ENCODE measurements at regions of chr16 and their contacts with region 1.

Region 1: DNA sequence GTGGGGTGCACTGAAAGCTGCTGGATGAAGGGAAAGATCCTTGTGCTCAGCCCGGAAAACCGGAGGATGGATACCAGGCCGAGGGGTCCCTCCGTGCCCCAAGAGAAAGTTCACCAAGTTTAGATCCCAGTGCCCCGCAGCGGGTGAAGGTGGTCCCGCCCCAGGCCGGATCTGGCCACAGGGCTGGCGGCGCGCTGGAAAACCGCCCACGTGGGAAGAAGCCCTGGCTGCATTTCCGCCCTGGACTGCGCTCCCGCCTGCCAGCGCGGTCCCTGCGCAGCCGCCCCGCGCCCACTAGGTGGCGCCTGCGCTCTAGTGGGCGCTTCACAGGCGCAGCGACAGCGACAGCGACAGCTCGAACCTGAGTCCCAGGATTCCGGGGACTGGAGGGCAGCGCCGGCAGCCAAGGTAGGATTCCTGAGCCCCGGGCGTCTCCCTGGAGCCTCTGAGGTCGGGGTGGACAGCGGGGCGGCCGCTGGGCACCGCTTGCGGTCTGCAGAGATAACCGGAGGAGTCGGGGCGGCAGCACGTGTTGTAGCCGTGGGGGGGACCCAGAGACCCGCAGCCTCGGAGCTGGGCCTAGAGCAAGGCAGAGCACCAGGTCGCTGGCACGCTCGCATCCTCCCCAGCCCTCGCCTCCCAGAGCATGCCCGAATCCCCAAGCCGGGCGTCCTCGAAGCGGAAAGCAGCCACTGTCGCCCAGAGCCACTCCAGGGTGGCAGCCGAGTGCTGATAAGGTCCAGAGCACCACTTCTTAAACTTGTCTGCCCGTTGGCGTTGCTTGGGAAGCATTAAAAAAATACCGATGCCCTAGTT is at the start of gene CHD9:
- DNase-seq: peak; percentile 87
- H3K4me3 ChIP-seq: peak within 1 kb of the TSS; percentile 43 to 72 (median 60)
- H3K27ac ChIP-seq: peak within 1 kb of the TSS; percentile 87 to 97 (median 94)
- H3K4me1 ChIP-seq: peaks cover 21 to 48% (median 33%) of the 10 kb centered on the region in 4 donors
- H3K27me3 ChIP-seq: no peaks in the 10 kb centered on the region
- CTCF ChIP-seq: peak; percentile 99 to 100 (median 99)
- EP300 ChIP-seq: no peak
- POLR2A ChIP-seq: peak; percentile 66
- total RNA-seq, gene CHD9: 37.4 to 112 (median 64.4) TPM

Region 2: GRCh38 chr16:52203096-52203495 is 851.8 kb before region 1 on chr16:
- in situ Hi-C with region 1: no loop called
- intact Hi-C with region 1: no loop called
- DNase-seq: no peak
- H3K4me3 ChIP-seq: no peak overlapping the region
- H3K27ac ChIP-seq: no peak overlapping the region
- H3K4me1 ChIP-seq: no peaks in the 10 kb centered on the region
- H3K27me3 ChIP-seq: no peaks in the 10 kb centered on the region
- CTCF ChIP-seq: no peak
- EP300 ChIP-seq: no peak
- POLR2A ChIP-seq: no peak

Region 3: DNA sequence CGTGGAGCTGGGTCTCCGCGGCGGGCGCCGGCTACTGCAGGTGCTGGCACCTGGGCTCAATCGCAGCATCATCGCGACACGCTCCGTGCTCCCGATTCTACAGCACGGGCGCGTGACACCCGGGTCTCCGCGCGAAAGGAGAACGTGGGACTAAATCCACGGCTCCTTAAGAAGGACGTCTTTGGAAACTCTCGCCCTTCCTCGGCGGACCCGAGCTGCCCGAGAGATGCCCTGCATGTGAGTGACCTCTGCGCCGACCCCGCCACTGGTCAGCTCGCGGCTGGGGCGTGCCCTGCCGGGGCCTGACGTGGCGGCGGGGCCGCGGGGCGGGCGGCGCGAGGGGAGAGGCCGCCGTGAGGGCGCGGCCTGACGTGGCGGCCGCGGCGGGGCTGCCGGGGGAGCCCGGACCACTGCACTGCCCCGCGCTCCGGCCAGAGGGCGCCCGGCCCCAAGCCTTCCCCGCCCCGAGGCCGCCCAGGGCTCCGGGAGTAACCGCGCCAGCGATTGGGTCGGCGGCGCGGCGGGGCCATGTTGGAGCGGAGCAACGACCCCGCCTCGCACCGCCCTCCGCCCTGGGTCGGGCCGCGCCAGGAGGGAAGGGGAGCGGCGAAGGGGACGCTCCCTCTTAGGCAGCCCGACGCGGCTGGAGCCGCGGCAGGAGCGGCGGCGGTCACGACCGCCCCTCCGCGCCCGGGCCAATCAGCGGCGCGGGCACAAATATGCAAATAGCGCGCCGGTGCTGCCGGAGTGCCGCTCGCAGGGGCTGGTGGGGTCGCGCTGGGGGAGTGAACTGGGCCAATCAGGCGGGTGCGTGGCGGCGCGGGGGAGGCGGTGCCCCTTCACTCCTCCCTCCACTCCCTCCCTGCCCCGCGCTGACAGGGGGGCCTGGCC is 75.5 kb after region 1 on chr16:
- in situ Hi-C with region 1: no loop called
- intact Hi-C with region 1: loop called (anchors 2 kb)
- DNase-seq: peak; percentile 97
- H3K4me3 ChIP-seq: peak overlapping the region; percentile 79 to 97 (median 92)
- H3K27ac ChIP-seq: peak overlapping the region; percentile 88 to 98 (median 98)
- H3K4me1 ChIP-seq: peaks cover 6 to 43% (median 29%) of the 10 kb centered on the region in 4 donors
- H3K27me3 ChIP-seq: no peaks in the 10 kb centered on the region
- CTCF ChIP-seq: peak in 4 of 5 experiments; percentile 48 to 70 (median 53)
- EP300 ChIP-seq: no peak
- POLR2A ChIP-seq: peak; percentile 59

Region 4: GRCh38 chr16:53142823-53143568 is 88.1 kb after region 1 on chr16:
- in situ Hi-C with region 1: loop called in 1 of 4 experiments (anchors 10 kb)
- intact Hi-C with region 1: no loop called
- DNase-seq: no peak
- H3K4me3 ChIP-seq: no peak overlapping the region
- H3K27ac ChIP-seq: no peak overlapping the region
- H3K4me1 ChIP-seq: peaks cover 0 to 16% (median 9%) of the 10 kb centered on the region in 4 donors
- H3K27me3 ChIP-seq: no peaks in the 10 kb centered on the region
- CTCF ChIP-seq: no peak
- EP300 ChIP-seq: no peak
- POLR2A ChIP-seq: no peak

Region 5: DNA sequence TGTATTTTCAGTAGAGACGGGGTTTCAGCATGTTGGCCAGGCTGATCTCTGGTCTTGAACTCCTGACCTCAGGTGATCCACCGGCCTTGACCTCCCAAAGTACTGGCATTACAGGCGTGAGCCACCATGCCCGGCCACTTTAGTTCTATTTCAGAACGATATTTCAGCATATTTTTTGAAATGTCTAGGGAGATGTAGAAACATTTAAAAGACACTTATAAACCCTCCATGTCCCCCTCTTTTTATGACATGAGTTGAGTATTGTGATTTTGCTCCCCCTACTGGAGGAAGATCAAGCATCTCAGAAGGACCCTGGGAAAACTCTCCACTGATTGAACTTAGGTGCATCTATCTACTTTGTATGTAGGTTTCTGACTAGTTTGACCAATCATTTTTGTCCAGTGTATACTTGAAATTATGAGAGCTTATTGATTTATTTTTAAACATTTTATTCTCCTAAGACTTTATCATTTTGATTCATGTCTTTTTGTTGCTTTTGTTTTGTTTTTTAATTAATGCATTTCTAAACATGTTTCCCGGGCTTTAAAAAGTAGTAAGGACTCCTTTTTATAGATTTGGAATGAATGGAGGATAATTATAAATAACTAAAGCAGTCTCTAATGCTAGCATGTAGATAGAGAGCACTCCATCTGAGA is 105.0 kb after region 1 on chr16:
- in situ Hi-C with region 1: loop called in 2 of 4 experiments (anchors 10 to 25 kb)
- intact Hi-C with region 1: no loop called
- DNase-seq: no peak
- H3K4me3 ChIP-seq: no peak overlapping the region
- H3K27ac ChIP-seq: no peak overlapping the region
- H3K4me1 ChIP-seq: peaks cover 0 to 4% (median 1%) of the 10 kb centered on the region in 4 donors
- H3K27me3 ChIP-seq: no peaks in the 10 kb centered on the region
- CTCF ChIP-seq: peak; percentile 63 to 73 (median 70)
- EP300 ChIP-seq: no peak
- POLR2A ChIP-seq: no peak

Region 6: GRCh38 chr16:53207810-53208752 is 153.2 kb after region 1 on chr16:
- in situ Hi-C with region 1: loop called in 1 of 4 experiments (anchors 25 kb)
- intact Hi-C with region 1: no loop called
- DNase-seq: peak; percentile 32
- H3K4me3 ChIP-seq: peak overlapping the region in 3 of 4 donors; percentile 17 to 37 (median 26)
- H3K27ac ChIP-seq: peak overlapping the region; percentile 81 to 86 (median 85)
- H3K4me1 ChIP-seq: peaks cover 8 to 61% (median 34%) of the 10 kb centered on the region in 4 donors
- H3K27me3 ChIP-seq: no peaks in the 10 kb centered on the region
- CTCF ChIP-seq: peak; percentile 37 to 64 (median 39)
- EP300 ChIP-seq: no peak
- POLR2A ChIP-seq: no peak